ENCODE measurements at regions of chr17 and their contacts with region 1.

Region 1: GRCh38 chr17:63859257-63859656 is 14.2 kb downstream of the CSH2 start:
- DNase-seq: no peak
- H3K4me3 ChIP-seq: no peak overlapping the region
- H3K27ac ChIP-seq: no peak overlapping the region
- H3K4me1 ChIP-seq: no peaks in the 10 kb centered on the region
- H3K27me3 ChIP-seq: peaks cover 0 to 2% (median under 1%) of the 10 kb centered on the region in 4 experiments; a peak in 2 of 7 replicates
- CTCF ChIP-seq: no peak
- EP300 ChIP-seq: no peak
- POLR2A ChIP-seq: no peak
- RAD21 ChIP-seq: no peak

Region 2: DNA sequence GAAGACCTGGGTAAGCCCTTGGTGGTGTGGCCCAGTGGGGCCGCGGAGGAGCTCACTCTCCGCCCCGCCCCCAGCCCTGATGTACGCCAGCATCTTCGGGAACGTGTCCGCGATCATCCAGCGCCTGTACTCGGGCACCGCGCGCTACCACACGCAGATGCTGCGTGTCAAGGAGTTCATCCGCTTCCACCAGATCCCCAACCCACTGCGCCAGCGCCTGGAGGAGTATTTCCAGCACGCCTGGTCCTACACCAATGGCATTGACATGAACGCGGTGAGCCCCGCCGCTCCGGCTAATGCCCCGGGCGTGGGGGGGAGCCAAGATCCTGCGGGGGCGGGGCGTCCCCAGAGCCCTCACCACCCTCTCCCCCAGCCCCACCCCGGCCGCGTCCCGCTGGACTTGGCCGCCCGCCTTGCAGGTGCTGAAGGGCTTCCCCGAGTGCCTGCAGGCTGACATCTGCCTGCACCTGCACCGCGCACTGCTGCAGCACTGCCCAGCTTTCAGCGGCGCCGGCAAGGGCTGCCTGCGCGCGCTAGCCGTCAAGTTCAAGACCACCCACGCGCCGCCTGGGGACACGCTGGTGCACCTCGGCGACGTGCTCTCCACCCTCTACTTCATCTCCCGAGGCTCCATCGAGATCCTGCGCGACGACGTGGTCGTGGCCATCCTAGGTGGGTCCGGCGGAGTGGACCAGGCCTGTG is 321.1 kb before region 1 on chr17:
- CTCF ChIA-PET with region 1: no interaction called
- POLR2A ChIA-PET with region 1: no interaction called
- DNase-seq: peak in 1 of 2 experiments; percentile 55
- H3K4me3 ChIP-seq: peak overlapping the region; percentile 7 to 57 (median 22); a peak in 7 of 8 replicates
- H3K27ac ChIP-seq: no peak overlapping the region
- H3K4me1 ChIP-seq: peaks cover 0 to 15% (median 2%) of the 10 kb centered on the region in 4 experiments; a peak in 5 of 7 replicates
- H3K27me3 ChIP-seq: peaks cover 0 to 23% (median 14%) of the 10 kb centered on the region in 4 experiments; a peak in 5 of 7 replicates
- CTCF ChIP-seq: no peak
- EP300 ChIP-seq: no peak
- POLR2A ChIP-seq: no peak
- RAD21 ChIP-seq: no peak

Region 3: DNA sequence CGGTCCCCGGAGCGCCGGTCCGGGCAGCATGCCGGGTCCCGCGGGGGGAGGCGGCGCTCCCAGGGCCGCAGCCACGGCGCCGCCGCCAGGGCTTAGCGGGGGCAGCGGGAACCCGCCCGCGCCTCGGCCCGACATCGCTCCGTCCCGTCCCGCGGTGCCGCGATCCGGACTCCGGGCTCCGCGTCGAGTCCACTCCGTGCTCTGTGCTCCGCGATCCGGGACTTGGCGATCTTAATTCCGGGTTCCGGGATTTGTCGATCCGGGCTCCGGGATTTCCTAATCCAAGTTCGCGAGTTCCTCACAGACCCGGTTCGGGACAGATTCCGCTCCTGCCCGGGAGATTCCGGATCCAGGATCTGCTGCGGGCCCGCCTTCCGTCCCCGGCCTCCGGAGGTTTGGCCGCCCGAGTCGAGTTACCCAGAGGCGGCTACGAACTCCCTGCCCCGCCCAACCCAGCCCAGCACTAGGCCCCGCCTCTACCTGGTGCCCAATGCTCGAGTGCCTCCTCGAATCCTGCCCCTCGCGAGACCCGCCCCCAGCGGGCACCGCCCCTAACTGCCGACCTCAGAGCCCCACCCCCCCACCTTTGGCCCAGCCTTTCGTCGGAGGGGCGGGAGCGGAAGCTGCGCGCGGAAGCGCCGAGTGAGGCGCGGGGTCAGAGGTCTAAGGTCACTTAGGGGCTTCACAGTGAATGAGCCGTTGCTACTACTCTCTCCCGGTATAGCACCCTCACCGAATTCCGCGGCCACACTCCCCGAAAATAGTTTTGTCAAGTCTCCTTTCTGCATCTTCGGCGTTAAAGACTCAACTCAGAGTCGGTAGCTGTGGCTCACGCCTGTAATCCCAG is 16.5 kb before region 1 on chr17 and contains the start of gene SMARCD2:
- CTCF ChIA-PET with region 1: interaction called, 77 read pairs
- POLR2A ChIA-PET with region 1: interaction called, 3 read pairs
- DNase-seq: peak; percentile 97
- H3K4me3 ChIP-seq: peak within 1 kb of the TSS; percentile 76 to 97 (median 83)
- H3K27ac ChIP-seq: peak within 1 kb of the TSS; percentile 65; the same call in 1 of the 2 replicates
- H3K4me1 ChIP-seq: peaks cover 3 to 26% (median 24%) of the 10 kb centered on the region in 4 experiments
- H3K27me3 ChIP-seq: peaks cover 0 to 16% (median 10%) of the 10 kb centered on the region in 4 experiments; a peak in 6 of 7 replicates
- CTCF ChIP-seq: no peak
- EP300 ChIP-seq: peak in 1 of 2 experiments; percentile 89; a peak in 2 of 3 replicates
- POLR2A ChIP-seq: peak in 1 of 2 experiments; percentile 43; a peak in 1 of 3 replicates
- RAD21 ChIP-seq: no peak
- total RNA-seq, gene SMARCD2: 84.6 and 92.2 TPM in 2 replicates

Region 4: DNA sequence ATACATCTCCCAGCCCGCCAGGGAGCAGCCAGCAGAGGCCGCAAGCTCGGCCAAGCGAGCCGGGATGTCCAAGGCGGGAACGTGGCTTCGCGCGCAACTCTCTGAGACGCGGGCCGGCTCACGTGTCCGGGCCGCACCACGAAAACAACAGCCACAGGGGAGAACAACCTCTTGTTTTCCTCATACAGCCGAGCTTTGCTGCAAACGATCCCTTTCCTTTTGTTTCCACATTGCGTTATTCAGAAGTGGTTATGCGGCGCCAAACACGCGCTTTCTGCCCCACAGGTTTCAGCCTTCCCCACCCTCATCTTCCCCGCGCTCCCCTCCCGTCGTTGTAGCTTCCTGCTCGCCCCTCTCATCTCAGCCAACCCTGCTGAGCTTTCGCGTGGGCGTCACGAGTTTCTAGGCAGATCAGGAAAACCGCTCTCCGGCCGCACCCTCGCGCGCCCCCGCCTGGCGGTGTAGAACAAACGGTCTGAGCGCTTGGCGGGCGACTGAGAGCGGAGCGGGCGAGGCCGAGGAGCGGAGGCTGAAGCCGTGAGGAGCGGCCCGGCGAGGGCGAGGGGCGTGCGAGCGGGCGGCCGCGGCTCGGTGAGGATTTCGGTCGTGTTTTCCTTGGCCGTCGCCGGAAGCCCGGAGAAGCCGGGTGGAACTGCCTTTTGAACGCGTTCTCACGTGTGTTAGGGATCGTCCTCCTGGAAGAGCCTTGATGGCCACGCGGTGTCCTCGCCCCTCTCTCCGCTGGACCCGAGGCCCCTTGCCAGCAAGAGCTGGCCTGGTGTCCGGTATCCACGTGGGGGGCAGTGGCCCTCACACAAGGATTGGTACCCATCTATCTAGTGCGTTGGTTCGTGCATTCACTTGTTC is 10.2 kb before region 1 on chr17:
- CTCF ChIA-PET with region 1: interaction called, 77 read pairs
- POLR2A ChIA-PET with region 1: interaction called, 3 read pairs
- DNase-seq: peak; percentile 81 to 100
- H3K4me3 ChIP-seq: peak overlapping the region in 3 of 4 experiments; percentile 16 to 39 (median 25); a peak in 5 of 8 replicates
- H3K27ac ChIP-seq: peak overlapping the region; percentile 76; the same call in 1 of the 2 replicates
- H3K4me1 ChIP-seq: no peaks in the 10 kb centered on the region
- H3K27me3 ChIP-seq: peaks cover 0 to 29% (median 25%) of the 10 kb centered on the region in 4 experiments; a peak in 6 of 7 replicates
- CTCF ChIP-seq: peak; percentile 59 to 84 (median 75)
- EP300 ChIP-seq: peak in 1 of 2 experiments; percentile 99; a peak in 1 of 3 replicates
- POLR2A ChIP-seq: no peak
- RAD21 ChIP-seq: 0 out of 4 replicates have a peak, but pooled peaks of 1 of the 2 experiments have one; percentile 6

Region 5: DNA sequence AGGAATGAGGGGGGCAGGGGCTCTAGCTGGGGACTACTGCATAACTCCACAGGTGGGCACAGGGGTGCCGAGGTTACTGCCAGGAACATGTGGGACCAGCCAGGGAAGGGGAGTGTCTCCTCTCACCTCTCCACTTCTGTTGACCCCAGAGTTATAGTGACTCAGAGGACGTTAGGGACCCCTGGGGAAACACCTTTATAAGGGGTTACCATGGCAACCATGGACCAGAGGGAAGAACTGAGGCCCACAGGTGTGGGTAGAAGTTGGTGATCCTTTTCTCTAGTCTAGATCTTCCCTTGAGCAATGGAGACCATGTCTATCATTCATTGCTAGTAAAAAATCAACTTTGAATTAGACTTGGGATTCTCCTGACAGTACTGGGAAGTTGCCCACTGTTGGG is 17.6 kb after region 1 on chr17:
- CTCF ChIA-PET with region 1: interaction called, 66 read pairs
- POLR2A ChIA-PET with region 1: no interaction called
- DNase-seq: no peak
- H3K4me3 ChIP-seq: no peak overlapping the region
- H3K27ac ChIP-seq: no peak overlapping the region
- H3K4me1 ChIP-seq: peaks cover 1 to 12% (median 8%) of the 10 kb centered on the region in 4 experiments
- H3K27me3 ChIP-seq: no peaks in the 10 kb centered on the region; a peak in 1 of 7 replicates
- CTCF ChIP-seq: no peak
- EP300 ChIP-seq: no peak
- POLR2A ChIP-seq: no peak
- RAD21 ChIP-seq: no peak

Region 6: GRCh38 chr17:63881876-63882601 is 22.8 kb after region 1 on chr17 and contains the start of gene GH2:
- CTCF ChIA-PET with region 1: interaction called, 66 read pairs
- POLR2A ChIA-PET with region 1: no interaction called
- DNase-seq: peak in 1 of 2 experiments; percentile 88
- H3K4me3 ChIP-seq: peak within 1 kb of the TSS in 2 of 4 experiments; percentile 2 to 33; a peak in 3 of 8 replicates
- H3K27ac ChIP-seq: no peak within 1 kb of the TSS
- H3K4me1 ChIP-seq: peaks cover 3 to 15% (median 8%) of the 10 kb centered on the region in 4 experiments
- H3K27me3 ChIP-seq: no peaks in the 10 kb centered on the region
- CTCF ChIP-seq: peak; percentile 59 to 76 (median 72)
- EP300 ChIP-seq: no peak
- POLR2A ChIP-seq: no peak
- RAD21 ChIP-seq: peak; percentile 10 to 30; a peak in 2 of 4 replicates
- total RNA-seq, gene GH2: 0.60 and 1.2 TPM in 2 replicates